Ovary (tissue), 10 donors: ENCODE measurements at regions of chr12 and their contacts with region 1.

Region 1: DNA sequence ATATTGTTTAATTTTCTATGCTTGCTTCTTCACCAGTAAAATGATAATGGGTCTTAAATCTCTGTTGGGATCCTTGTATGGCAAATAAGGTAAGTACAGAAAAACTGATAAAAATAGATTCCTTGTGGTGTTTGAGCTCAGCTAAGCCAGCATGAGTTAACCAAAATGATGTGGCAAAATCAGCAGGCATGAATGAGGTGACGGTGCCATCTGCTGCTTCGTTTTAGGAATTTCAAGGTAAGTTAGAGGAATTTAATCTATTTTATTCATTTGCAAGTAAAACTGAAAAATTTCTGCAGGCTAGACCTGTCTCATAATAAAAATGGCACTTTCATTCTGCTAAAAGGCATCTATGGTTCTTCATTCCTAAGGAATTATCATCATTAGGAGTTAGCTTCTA is 10.0 kb upstream of the CLEC7A start:
- DNase-seq: peak in 3 of 5 donors; percentile 23 to 52 (median 49)
- H3K4me3 ChIP-seq: no peak overlapping the region
- H3K27ac ChIP-seq: no peak overlapping the region
- H3K4me1 ChIP-seq: no peaks in the 10 kb centered on the region
- H3K27me3 ChIP-seq: no peaks in the 10 kb centered on the region
- CTCF ChIP-seq: peak in 2 of 3 donors; percentile 66 to 75
- EP300 ChIP-seq: no peak
- POLR2A ChIP-seq: no peak

Region 2: GRCh38 chr12:10001171-10001776 is 138.7 kb before region 1 on chr12:
- intact Hi-C with region 1: no loop called
- DNase-seq: no peak
- H3K4me3 ChIP-seq: no peak overlapping the region
- H3K27ac ChIP-seq: no peak overlapping the region
- H3K4me1 ChIP-seq: no peaks in the 10 kb centered on the region
- H3K27me3 ChIP-seq: no peaks in the 10 kb centered on the region
- CTCF ChIP-seq: no peak
- EP300 ChIP-seq: no peak
- POLR2A ChIP-seq: no peak

Region 3: DNA sequence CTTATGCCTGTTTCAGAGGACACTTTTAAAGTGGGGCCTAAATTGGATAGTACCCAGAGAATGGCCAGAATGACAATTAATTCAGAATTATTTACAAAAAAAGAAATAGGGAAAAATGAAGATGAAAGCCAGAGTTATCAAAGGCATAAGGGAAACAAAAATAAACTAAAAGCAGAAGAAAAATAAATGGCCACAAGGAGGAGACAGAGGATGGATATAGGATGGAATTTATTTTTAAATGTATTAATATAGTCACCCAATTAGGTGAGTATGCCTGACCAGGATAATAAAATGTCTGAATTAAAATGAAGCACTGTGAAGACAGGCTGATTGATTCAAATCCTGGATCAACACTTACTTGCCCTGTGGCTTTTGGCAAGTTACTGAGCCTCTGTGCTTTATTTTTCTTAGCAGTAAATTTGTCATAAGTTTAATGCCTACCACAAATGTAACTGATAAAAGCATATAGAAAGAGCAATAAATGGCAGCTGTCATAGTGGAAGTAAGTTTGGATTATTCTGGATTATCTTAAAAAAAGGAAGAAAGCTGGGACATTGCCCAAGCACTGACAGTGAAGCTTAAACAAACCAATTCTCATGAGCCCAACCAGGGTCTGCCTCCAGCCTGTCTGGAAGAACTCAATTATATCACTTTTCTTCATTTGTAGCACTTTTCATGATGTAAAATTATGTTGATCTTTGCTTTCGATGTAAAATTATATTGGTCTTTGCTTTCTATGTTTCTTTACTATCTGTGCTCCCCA is 106.0 kb before region 1 on chr12:
- intact Hi-C with region 1: loop called (anchors 5 to 10 kb)
- DNase-seq: no peak
- H3K4me3 ChIP-seq: no peak overlapping the region
- H3K27ac ChIP-seq: no peak overlapping the region
- H3K4me1 ChIP-seq: no peaks in the 10 kb centered on the region
- H3K27me3 ChIP-seq: no peaks in the 10 kb centered on the region
- CTCF ChIP-seq: peak in 2 of 3 donors; percentile 13 to 55
- EP300 ChIP-seq: no peak
- POLR2A ChIP-seq: no peak

Region 4: DNA sequence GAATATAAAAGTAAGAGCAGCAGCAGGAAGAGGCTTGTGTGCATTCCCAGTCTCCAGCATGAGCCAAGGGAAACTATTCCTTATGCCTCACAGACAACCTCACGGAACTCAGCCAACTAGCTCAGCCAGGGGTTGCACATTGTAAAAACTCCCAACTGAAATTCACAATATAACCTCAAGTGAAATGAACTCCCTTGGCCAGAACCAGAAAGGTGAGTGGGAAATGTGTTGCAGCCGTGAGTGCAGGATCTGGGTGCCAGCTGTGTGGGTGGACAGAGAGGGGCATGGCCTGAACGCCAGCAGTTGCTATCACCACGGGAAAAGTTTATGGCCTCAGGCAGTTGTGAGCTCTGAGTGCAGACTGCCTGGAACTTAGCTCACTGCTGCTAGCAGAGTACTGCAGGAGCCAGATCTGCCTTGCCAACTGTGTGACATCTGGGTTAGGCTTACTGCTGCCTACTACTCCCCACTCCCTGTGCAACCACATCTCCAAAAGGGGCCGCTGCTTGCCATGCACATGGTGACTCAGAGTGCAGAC is 38.9 kb before region 1 on chr12:
- intact Hi-C with region 1: no loop called
- DNase-seq: peak in 3 of 5 donors; percentile 30 to 48 (median 36)
- H3K4me3 ChIP-seq: no peak overlapping the region
- H3K27ac ChIP-seq: no peak overlapping the region
- H3K4me1 ChIP-seq: peaks cover 1% of the 10 kb centered on the region
- H3K27me3 ChIP-seq: no peaks in the 10 kb centered on the region
- CTCF ChIP-seq: no peak
- EP300 ChIP-seq: no peak
- POLR2A ChIP-seq: no peak